Activated CD4-positive, alpha-beta T cell treated with anti-CD3 and anti-CD28 coated beads, Interleukin-2, amount 10 ng/mL, durations not matched to agents 7 days and 5 days (primary cell): ENCODE measurements at regions of chr20 and their contacts with region 1.

Region 1: GRCh38 chr20:14632906-14633305 is 295.5 kb upstream of the FLRT3 start:
- DNase-seq: no peak
- H3K4me3 Mint-ChIP-seq: no peak overlapping the region
- H3K27ac Mint-ChIP-seq: no peak overlapping the region
- H3K4me1 Mint-ChIP-seq: no peaks in the 10 kb centered on the region
- H3K27me3 Mint-ChIP-seq: no peaks in the 10 kb centered on the region

Region 2: GRCh38 chr20:14573676-14574075 is 59.2 kb before region 1 on chr20:
- CTCF ChIA-PET with region 1: no interaction called
- POLR2A ChIA-PET with region 1: interaction called, 10 read pairs
- DNase-seq: no peak
- H3K4me3 Mint-ChIP-seq: no peak overlapping the region
- H3K27ac Mint-ChIP-seq: no peak overlapping the region
- H3K4me1 Mint-ChIP-seq: no peaks in the 10 kb centered on the region
- H3K27me3 Mint-ChIP-seq: no peaks in the 10 kb centered on the region

Region 3: DNA sequence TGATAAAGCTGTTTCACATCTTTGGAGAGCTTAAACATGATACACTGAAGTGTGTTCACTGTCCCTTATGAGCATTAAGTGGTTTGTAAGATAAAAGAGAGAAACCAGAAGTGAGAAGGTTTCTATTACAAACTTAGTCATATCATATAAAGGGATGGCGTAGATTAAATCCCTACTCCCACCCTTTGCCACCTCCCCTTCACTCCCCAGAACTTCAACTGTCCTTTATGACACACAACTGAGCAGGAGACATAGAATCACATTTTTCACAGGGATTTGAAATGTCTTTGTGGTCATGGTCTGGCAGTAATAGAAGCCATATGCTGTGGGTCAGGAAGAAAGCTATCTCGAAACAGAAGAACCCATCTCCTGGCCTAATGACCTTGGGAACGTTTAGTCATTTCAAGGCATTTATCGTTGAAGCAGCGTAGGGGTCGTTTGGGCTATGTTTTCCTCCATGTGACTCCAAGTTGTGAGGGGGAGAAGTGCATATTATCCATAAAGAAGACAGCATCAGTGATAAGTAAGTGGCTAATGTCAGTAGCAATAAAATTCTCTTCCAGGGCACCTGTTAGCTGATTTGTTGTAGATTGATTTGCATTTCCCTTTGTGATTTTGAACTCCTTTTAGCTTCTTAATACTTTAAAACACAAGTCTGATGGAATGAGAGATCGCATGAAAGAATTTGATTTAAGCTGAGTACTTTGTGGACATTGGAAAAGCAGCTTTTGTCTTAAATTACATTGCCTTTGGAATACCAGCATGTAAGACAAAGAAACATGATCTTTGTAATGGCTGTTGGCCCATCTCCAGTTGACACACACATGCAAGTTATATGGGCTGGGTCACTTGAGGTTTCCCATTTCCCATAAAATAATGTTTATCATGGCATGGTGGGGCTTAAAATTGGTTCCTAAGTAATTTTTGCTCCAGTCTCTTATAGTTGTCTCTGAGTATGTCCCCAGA is 206.0 kb after region 1 on chr20:
- CTCF ChIA-PET with region 1: no interaction called
- POLR2A ChIA-PET with region 1: no interaction called
- DNase-seq: no peak
- H3K4me3 Mint-ChIP-seq: no peak overlapping the region
- H3K27ac Mint-ChIP-seq: no peak overlapping the region
- H3K4me1 Mint-ChIP-seq: no peaks in the 10 kb centered on the region
- H3K27me3 Mint-ChIP-seq: no peaks in the 10 kb centered on the region